MCF 10A (cell line): ENCODE measurements at regions of chr5 and their contacts with region 1.

Region 1: DNA sequence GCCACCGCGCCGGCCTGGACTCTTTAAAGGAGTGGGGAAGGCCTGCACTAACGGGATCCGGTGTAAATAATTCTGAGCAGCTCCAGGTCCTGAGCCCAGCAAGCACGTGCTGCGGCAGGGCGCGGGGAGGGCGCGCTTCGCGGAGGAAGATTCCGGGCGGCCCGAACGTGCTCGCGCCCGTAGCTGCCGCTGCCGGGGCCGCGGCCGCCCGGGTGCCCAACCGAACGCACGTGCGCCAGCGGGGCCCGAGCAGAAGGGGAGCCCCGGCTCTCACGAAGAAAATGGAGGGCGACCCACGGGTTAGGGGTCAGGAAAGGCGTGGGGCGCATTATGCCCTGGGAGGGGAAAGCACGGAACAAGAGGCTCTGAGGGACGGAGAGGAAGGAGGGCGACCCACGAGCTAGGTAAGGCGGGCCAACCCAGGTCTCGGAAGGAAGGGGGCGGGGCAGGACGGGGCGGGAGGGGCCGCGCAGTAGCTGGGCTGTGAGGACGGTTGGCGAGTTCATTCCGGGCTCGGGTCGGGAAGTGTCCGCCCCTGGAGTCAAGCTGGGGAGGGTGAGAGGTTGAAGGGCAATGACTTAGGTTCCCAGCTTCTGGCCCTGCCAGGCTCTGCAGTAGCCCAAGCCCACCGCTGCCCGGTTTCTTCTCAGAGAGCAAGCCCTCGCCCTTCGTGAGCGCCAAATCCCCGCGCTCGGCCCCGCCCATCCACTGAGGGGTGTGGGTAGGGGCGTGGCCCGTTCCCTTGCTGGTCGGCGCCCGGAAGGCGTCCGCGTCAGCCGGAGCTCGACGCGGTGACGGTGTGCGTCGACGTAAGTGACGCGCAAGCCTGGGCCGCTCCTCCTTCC is at the start of gene ZNF131:
- DNase-seq: peak; percentile 96
- H3K4me3 Mint-ChIP-seq: peak within 1 kb of the TSS; percentile 92
- H3K27ac Mint-ChIP-seq: peak within 1 kb of the TSS; percentile 90
- H3K4me1 Mint-ChIP-seq: peaks cover 5% of the 10 kb centered on the region
- H3K27me3 Mint-ChIP-seq: no peaks in the 10 kb centered on the region
- CTCF ChIP-seq: no peak
- total RNA-seq, gene ZNF131: 41.3 and 42.4 TPM in 2 replicates

Region 2: GRCh38 chr5:43008369-43009153 is 112.4 kb before region 1 on chr5:
- CTCF ChIA-PET with region 1: no interaction called
- POLR2A ChIA-PET with region 1: interaction called, 21 read pairs
- intact Hi-C with region 1: no loop called
- DNase-seq: peak; percentile 82
- H3K4me3 Mint-ChIP-seq: peak overlapping the region; percentile 76
- H3K27ac Mint-ChIP-seq: peak overlapping the region; percentile 94
- H3K4me1 Mint-ChIP-seq: peaks cover 17% of the 10 kb centered on the region
- H3K27me3 Mint-ChIP-seq: no peaks in the 10 kb centered on the region
- CTCF ChIP-seq: no peak

Region 3: DNA sequence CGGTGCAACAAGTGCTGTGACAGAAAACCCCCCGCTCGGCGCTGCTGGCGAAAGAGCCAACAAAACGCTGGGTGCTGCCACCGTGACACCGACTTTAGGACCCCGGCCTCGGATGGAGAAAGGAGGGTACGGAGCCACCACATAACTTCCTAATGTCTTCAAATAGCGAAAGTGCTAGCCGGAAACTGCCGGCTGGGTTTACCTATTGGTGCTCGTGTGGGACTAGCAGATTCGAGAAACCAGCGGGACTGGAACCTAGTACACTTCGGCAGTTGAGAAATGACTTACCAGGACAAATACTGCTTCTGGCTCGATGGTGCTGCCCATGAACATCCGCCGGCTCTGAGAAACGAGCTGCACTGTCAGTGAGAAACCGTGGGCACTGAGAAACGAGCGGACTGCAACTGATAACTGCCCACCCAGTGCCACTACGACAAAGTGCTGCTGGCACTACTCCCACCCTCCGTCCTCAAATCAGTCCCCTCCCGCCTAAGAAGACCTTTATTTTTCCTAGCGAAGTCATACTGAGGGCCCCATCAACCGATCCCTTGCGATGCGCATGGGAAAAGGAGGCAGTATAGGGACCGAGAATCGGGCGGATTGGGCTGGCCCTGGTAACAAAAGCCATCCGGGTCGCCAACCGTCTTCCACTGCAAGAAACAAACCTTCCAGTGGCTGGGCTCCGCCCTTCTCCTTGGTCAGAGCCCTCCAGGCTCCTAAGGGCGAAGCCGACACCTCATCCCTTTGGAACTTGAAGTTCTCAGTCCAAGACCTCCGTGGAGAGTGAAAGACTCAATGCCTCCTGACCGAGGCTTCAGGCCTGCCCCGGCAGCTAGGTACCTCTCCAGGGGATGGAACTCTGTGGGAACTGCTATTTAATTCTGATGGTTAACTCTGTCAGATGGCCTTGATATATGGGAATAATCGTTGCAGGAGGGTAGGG is 53.9 kb before region 1 on chr5:
- CTCF ChIA-PET with region 1: interaction called, 6 read pairs
- POLR2A ChIA-PET with region 1: interaction called, 89 read pairs
- intact Hi-C with region 1: no loop called
- DNase-seq: peak; percentile 91
- H3K4me3 Mint-ChIP-seq: peak overlapping the region; percentile 99
- H3K27ac Mint-ChIP-seq: peak overlapping the region; percentile 93
- H3K4me1 Mint-ChIP-seq: peaks cover 12% of the 10 kb centered on the region
- H3K27me3 Mint-ChIP-seq: no peaks in the 10 kb centered on the region
- CTCF ChIP-seq: no peak

Region 4: DNA sequence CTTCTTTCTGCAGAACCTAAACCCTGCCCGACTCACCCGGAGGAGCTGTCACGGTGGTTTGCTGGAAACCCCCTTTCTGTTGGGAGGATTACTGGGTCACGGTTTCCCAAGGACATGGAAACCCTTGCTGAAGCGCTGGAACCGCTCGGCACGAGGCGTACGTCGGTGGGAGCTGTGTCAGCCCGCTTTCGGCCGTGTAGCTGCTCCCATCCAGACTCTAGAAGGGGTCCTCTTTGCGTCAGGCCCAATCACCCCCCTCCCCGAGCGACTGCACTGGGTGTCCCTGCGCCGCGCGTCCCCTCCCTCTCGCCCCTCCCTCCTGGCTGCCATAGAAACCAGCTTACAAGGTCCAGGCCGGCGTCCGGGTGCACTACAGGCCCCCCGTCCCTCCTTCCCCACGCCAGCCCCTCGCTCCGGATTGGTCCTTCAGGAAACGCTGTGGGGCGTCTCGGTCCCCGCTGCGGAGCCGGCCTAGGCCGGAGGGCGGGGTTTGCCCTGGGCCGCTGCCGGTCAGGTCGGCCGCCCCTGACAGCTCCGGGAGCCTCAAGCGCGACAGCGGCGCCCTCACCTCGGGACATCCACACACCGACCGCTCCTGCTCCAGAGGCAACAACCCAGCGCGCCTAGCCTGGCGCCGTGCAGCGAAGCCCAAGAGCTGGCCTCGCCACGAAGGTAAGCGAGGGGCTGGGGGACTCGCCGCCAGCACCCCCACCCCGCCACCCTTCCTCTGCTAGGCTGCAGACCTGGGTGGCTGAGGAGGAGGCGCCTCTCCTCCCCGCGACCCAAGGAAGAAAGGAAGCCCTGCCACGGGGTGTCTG is 71.0 kb after region 1 on chr5 and contains the start of gene NIM1K:
- CTCF ChIA-PET with region 1: interaction called, 3 read pairs
- POLR2A ChIA-PET with region 1: interaction called, 12 read pairs
- intact Hi-C with region 1: no loop called
- DNase-seq: no peak
- H3K4me3 Mint-ChIP-seq: peak within 1 kb of the TSS; percentile 79
- H3K27ac Mint-ChIP-seq: peak within 1 kb of the TSS; percentile 75
- H3K4me1 Mint-ChIP-seq: no peaks in the 10 kb centered on the region
- H3K27me3 Mint-ChIP-seq: peaks cover 10% of the 10 kb centered on the region
- CTCF ChIP-seq: no peak
- total RNA-seq, gene NIM1K: not detected in 2 replicates

Region 5: GRCh38 chr5:43313035-43313853 is 192.3 kb after region 1 on chr5 and contains the start of gene HMGCS1:
- CTCF ChIA-PET with region 1: interaction called, 5 read pairs
- POLR2A ChIA-PET with region 1: interaction called, 52 read pairs
- intact Hi-C with region 1: loop called (anchors 5 kb)
- DNase-seq: peak; percentile 99
- H3K4me3 Mint-ChIP-seq: peak within 1 kb of the TSS; percentile 100
- H3K27ac Mint-ChIP-seq: peak within 1 kb of the TSS; percentile 96
- H3K4me1 Mint-ChIP-seq: peaks cover 53% of the 10 kb centered on the region
- H3K27me3 Mint-ChIP-seq: no peaks in the 10 kb centered on the region
- CTCF ChIP-seq: no peak
- total RNA-seq, gene HMGCS1: 36.2 and 42.6 TPM in 2 replicates